ENCODE measurements at regions of chr5 and their contacts with region 1.

Region 1: DNA sequence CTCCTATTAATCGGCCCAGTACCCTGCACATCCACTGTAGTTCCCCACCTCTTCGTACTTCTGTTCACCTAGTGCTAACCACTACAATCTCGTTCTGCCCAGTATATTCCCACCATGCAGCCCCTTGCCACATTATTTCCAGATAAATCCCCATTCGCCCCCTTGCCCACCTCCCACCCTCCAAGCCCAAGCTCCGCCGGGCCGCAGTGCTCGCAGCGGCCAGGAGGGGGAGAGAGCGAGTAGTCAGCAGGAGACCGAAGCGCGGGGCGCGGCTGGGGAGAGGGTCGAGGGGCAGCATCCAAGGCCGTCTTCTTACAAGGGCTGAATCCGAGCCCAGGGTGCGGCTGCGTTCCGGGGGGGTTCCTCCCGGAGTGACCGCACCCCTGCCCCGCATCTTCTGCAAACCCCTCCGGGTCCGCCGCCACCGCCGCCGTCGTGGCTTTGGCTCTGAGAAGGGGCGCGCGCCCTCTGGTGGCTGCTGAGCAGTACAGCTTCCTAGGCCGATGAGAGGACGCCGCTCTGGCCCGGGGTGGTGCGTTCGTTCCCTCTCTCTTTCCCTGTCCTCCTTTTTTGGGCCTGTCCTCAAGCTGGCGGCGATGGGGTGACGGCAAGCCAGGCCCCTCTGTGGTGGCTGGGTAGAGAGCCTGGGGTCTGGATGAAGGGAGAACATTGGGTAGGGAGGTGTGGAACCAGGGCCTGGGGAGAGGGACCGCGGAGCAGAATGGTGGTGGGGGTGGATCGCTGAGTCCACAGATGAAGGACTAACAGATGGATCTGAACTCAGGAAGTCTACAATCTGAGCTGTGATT is 30.0 kb upstream of the PSD2 start:
- DNase-seq: peak; percentile 79
- H3K4me3 ChIP-seq: peak overlapping the region; percentile 40 to 63 (median 49)
- H3K27ac ChIP-seq: peak overlapping the region in 2 of 4 donors; percentile 40 to 42
- H3K4me1 ChIP-seq: peaks cover 0 to 15% (median 0%) of the 10 kb centered on the region in 4 donors
- H3K27me3 ChIP-seq: peaks cover 31% of the 10 kb centered on the region
- CTCF ChIP-seq: peak; percentile 95 to 100 (median 99)
- EP300 ChIP-seq: no peak
- POLR2A ChIP-seq: no peak

Region 2: DNA sequence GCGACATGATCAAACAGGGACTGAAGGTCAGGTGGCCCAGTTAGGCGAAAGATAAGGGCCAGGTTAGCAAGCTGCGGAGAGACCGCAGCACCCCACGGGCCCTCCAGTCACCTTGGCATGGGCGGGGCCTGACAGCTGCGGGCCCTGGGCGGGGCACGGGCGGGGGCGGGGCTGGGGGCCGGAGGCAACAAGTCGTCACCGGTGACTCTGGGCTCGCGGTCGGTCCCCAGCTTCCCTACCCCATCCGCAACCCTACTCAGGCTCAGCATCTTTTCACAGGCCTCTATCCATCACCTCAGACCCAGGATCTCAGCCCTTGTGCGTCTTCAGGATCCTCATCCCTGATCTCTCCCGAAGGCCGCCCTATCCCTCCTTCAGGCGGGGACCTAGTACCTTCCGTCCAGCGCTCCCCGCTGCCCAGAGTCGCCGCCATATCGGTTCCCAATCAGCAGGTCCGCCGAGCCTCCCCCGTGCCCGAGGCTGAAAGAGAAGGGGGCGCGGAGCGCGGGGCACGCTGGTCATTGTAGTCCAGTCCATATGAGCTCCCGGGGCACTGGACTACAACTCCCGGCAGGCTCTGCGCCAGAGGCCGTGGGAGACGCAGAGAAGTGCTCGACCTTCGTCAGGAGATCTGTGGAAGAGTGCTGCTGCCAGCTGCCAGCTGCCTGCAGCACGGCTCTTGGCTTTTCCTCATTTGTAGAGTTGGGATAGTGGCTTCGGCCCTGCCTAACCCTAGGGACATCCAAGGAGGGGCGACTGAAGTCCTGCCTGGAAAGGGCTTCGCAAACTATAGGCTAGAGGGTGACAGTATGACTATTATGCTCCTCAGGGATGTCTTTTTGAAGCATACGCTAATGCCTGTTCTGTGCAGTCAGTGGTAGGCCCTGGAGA is 326.4 kb before region 1 on chr5 and contains the start of gene DNAJC18:
- in situ Hi-C with region 1: loop called in 1 of 4 experiments (anchors 25 kb)
- intact Hi-C with region 1: no loop called
- DNase-seq: peak; percentile 95
- H3K4me3 ChIP-seq: peak within 1 kb of the TSS; percentile 71 to 76 (median 74)
- H3K27ac ChIP-seq: peak within 1 kb of the TSS; percentile 88 to 96 (median 91)
- H3K4me1 ChIP-seq: peaks cover 3 to 14% (median 9%) of the 10 kb centered on the region in 4 donors
- H3K27me3 ChIP-seq: no peaks in the 10 kb centered on the region
- CTCF ChIP-seq: no peak
- EP300 ChIP-seq: no peak
- POLR2A ChIP-seq: peak; percentile 42
- total RNA-seq, gene DNAJC18: 0.37 to 3.8 (median 3.2) TPM

Region 3: GRCh38 chr5:140041492-140042392 is 276.1 kb after region 1 on chr5:
- in situ Hi-C with region 1: no loop called
- intact Hi-C with region 1: no loop called
- DNase-seq: peak; percentile 39
- H3K4me3 ChIP-seq: peak overlapping the region; percentile 36 to 66 (median 58)
- H3K27ac ChIP-seq: peak overlapping the region; percentile 33 to 85 (median 70)
- H3K4me1 ChIP-seq: peaks cover 5 to 40% (median 29%) of the 10 kb centered on the region in 4 donors
- H3K27me3 ChIP-seq: peaks cover 86% of the 10 kb centered on the region
- CTCF ChIP-seq: no peak
- EP300 ChIP-seq: no peak
- POLR2A ChIP-seq: no peak

Measured in transverse colon (tissue), 4 donors.